IMR-90 (cell line): ENCODE measurements at regions of chr10 and their contacts with region 1.

Region 1: DNA sequence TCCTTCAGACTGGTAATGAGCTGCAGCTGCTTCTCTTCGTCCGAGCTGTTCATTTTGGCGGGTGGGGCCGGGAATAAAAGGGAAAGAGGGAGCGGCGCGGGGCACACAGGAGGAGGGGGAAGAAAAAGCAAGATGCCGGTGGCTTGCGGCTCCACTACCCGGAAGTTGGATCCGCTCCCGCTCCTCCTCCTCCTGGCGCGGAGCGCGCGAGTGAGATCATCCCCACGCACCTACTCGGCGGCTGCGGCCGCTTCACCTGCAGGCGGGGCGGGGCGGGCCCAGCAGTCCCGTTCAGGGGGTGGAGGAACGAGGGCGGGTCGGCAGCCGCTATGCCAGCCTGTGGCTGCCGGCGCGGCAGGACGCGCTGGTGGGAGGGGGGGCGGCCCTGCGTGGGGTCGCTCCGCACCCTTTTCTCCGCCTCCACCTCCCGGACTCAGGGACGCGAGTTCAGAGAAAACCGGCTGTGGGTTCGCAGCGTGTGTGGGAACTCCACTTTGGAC is at the start of gene SHTN1:
- DNase-seq: peak; percentile 50
- ATAC-seq: peak; percentile 66
- H3K4me3 ChIP-seq: peak within 1 kb of the TSS; percentile 75
- H3K27ac ChIP-seq: no peak within 1 kb of the TSS; the same call in 1 of the 2 replicates
- H3K4me1 ChIP-seq: no peaks in the 10 kb centered on the region; the same call in 1 of the 2 replicates
- H3K27me3 ChIP-seq: no peaks in the 10 kb centered on the region
- CTCF ChIP-seq: no peak
- POLR2A ChIP-seq: no peak
- RAD21 ChIP-seq: no peak
- total RNA-seq, gene SHTN1: 0.54 and 1.4 TPM in 2 replicates

Region 2: DNA sequence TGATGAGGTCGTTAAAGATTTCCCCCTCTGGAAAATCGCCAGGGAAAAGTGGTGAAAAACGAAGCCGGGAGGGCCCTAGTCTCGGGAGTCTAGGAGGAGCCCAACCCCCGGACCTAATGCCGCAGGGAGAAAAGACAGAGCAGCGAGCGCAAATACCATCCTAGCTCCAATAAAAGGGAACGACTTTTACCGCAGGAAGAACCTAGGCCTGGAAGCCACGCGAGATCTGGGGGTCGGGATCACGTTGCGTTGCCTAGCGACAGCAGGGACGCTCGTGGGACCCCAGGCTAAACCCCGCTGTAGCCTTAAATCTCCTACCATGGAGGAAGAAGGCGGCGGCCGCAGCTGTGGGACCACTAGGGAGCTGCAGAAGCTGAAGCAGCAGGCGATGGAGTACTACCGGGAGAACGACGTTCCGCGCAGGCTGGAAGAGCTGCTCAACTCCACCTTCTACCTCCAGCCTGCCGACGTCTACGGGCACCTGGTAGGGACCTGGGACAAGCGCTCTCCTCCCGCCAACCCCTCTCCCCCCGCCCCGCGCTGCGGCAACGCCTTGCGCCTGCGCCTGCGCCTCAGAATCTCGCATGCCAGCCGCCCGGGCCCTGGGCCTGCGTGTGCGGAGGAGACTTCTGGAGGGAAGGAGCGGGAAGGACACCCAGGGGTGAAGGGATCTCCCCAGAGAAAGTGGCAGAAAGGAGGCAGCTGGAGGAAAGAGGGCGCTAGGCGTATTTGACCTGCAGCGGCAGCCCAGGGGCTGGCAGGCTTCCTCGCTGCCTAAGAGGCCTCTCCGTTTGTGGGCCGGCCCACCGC is 155.6 kb before region 1 on chr10 and contains the start of gene ENO4:
- CTCF ChIA-PET with region 1: no interaction called
- POLR2A ChIA-PET with region 1: no interaction called
- dilution Hi-C with region 1: no loop called
- in situ Hi-C with region 1: no loop called
- intact Hi-C with region 1: loop called (anchors 5 kb)
- DNase-seq: peak; percentile 73
- ATAC-seq: peak; percentile 91
- H3K4me3 ChIP-seq: peak within 1 kb of the TSS; percentile 76
- H3K27ac ChIP-seq: peak within 1 kb of the TSS; percentile 6; the same call in 1 of the 2 replicates
- H3K4me1 ChIP-seq: peaks cover 3% of the 10 kb centered on the region; the same call in 1 of the 2 replicates
- H3K27me3 ChIP-seq: peaks cover 14% of the 10 kb centered on the region
- CTCF ChIP-seq: no peak
- POLR2A ChIP-seq: no peak
- RAD21 ChIP-seq: no peak
- total RNA-seq, gene ENO4: under 0.01 TPM in 2 replicates

Region 3: GRCh38 chr10:117152668-117153067 is 147.6 kb after region 1 on chr10:
- CTCF ChIA-PET with region 1: no interaction called
- POLR2A ChIA-PET with region 1: no interaction called
- dilution Hi-C with region 1: no loop called
- in situ Hi-C with region 1: no loop called
- intact Hi-C with region 1: no loop called
- DNase-seq: no peak
- ATAC-seq: no peak
- H3K4me3 ChIP-seq: no peak overlapping the region
- H3K27ac ChIP-seq: no peak overlapping the region
- H3K4me1 ChIP-seq: no peaks in the 10 kb centered on the region
- H3K27me3 ChIP-seq: peaks cover 2% of the 10 kb centered on the region
- CTCF ChIP-seq: no peak
- POLR2A ChIP-seq: no peak
- RAD21 ChIP-seq: no peak